ENCODE measurements at regions of chr15 and their contacts with region 1.

Region 1: DNA sequence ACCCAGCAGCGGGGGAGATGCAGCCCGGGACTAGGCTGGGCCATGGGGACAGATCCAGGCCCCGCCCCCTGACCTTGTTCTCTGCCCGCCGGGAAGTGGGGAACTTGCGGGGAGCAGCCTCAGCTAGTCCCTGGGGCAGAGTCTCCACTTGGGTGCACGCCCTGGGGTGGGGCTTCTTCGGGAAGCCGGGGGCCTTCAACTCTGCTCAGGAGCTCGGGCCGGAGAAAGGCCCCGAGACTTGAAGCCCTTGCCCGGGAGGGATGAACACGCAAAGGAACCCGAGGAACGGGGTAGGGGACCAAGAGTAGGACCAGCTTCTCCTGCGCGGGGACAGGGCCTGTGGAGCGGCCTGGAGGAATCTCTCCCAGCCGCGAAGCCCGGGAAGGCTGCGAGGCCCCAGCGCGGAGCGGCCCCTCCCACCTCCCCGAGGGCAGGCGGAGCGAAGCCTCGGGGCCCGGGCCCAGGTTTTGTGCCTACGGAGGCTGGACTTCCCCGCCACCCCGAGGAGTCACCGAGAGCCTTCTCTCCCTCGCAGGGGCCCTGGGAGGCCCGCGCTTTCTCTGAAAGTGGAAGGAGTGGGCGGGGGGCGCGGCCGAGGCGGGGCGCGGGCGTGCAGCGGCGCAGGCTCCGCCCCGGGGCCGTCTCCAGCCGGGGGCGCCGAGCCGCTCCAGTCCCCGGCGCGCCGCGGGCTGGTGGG is at the start of gene ITPKA:
- DNase-seq: peak; percentile 63 to 86
- H3K4me3 ChIP-seq: peak within 1 kb of the TSS; percentile 76
- H3K27ac ChIP-seq: no peak within 1 kb of the TSS
- H3K4me1 ChIP-seq: peaks cover 17% of the 10 kb centered on the region
- H3K27me3 ChIP-seq: no peaks in the 10 kb centered on the region
- CTCF ChIP-seq: no peak
- total RNA-seq, gene ITPKA: 5.3 and 8.3 TPM in 2 replicates

Region 2: GRCh38 chr15:41377978-41378377 is 115.4 kb before region 1 on chr15:
- CTCF ChIA-PET with region 1: no interaction called
- POLR2A ChIA-PET with region 1: no interaction called
- intact Hi-C with region 1: no loop called
- DNase-seq: no peak
- H3K4me3 ChIP-seq: no peak overlapping the region
- H3K27ac ChIP-seq: no peak overlapping the region
- H3K4me1 ChIP-seq: no peaks in the 10 kb centered on the region
- H3K27me3 ChIP-seq: no peaks in the 10 kb centered on the region
- CTCF ChIP-seq: no peak

Region 3: GRCh38 chr15:41507820-41508290 is 14.5 kb after region 1 on chr15:
- CTCF ChIA-PET with region 1: no interaction called
- POLR2A ChIA-PET with region 1: interaction called, 4 read pairs
- intact Hi-C with region 1: loop called (anchors 1 kb)
- DNase-seq: peak; percentile 72 to 92
- H3K4me3 ChIP-seq: no peak overlapping the region
- H3K27ac ChIP-seq: no peak overlapping the region
- H3K4me1 ChIP-seq: no peaks in the 10 kb centered on the region
- H3K27me3 ChIP-seq: no peaks in the 10 kb centered on the region
- CTCF ChIP-seq: no peak

Region 4: DNA sequence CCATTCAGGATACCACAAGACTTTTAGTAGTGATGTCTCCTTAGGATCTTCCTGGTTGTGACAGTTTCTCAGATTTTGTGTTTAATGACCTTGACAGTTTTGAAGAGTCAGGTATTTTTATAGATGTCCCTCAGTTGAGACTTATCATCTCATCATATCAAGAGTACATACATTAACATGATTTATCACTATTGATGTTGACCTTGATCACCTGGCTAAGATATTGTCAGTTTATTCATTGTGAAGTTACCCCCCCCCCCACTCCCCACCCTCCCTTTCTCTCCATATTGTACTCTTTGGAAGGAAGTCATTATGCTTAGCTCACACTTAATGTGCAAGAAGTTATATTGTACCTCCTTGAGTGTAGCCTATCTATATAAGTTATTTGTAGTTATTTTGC is 209.8 kb after region 1 on chr15:
- CTCF ChIA-PET with region 1: no interaction called
- POLR2A ChIA-PET with region 1: interaction called, 21 read pairs
- intact Hi-C with region 1: no loop called
- DNase-seq: no peak
- H3K4me3 ChIP-seq: no peak overlapping the region
- H3K27ac ChIP-seq: no peak overlapping the region
- H3K4me1 ChIP-seq: no peaks in the 10 kb centered on the region
- H3K27me3 ChIP-seq: no peaks in the 10 kb centered on the region
- CTCF ChIP-seq: no peak

Region 5: GRCh38 chr15:41756198-41756597 is 262.8 kb after region 1 on chr15:
- CTCF ChIA-PET with region 1: no interaction called
- POLR2A ChIA-PET with region 1: interaction called, 14 read pairs
- intact Hi-C with region 1: no loop called
- DNase-seq: no peak
- H3K4me3 ChIP-seq: no peak overlapping the region
- H3K27ac ChIP-seq: no peak overlapping the region
- H3K4me1 ChIP-seq: no peaks in the 10 kb centered on the region
- H3K27me3 ChIP-seq: no peaks in the 10 kb centered on the region
- CTCF ChIP-seq: no peak

Measured in PC-9 (cell line).